ENCODE measurements at regions of chr1 and their contacts with region 1.

Region 1: DNA sequence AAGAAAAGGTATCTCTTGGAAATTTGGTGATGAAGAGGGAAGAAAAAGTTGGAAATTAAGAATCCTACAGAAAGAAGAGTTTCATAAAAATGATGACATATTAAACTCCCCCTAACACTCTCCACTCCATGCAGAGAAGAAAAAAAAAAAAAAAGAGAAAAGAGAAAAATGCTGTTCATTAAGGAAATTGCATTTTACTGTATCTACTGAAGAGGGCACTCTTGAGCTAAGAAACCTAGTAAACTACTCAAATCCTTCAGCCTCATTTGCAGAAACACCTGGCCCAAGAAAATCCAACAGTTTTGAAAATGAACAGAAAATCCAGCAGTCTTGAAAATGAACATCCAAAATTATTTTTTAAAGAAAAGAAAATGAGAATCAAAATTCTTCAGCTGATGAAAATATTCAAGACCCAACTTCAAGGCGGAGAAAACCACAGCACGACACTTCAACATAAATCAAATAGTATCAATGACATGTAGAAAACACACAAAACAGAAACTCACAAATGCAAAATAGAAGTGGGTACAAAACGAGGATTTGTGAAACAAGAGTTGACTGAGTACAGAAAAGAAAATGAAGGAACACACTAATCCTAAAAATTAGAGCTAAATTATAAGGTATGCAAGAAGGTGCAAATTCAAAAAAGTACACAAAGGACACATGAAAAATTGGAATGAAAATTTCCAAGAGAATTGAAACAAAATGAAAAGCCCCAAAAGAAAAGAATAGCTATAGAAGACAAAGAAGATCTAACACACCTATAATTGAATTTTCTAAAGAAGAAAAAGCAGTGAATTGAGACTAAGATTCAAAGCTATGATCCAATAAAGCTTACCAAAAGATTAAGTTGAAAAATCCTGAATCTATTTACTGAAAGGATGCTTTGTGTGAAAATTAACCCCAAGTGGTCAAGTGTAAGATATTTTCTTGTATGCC is 73.2 kb upstream of the DNAJC6 start:
- DNase-seq: peak; percentile 52
- H3K4me3 ChIP-seq: no peak overlapping the region
- H3K27ac ChIP-seq: no peak overlapping the region
- H3K4me1 ChIP-seq: no peaks in the 10 kb centered on the region
- H3K27me3 ChIP-seq: no peaks in the 10 kb centered on the region
- CTCF ChIP-seq: peak; percentile 37 to 40
- POLR2A ChIP-seq: no peak

Region 2: GRCh38 chr1:65066766-65067490 is 169.2 kb before region 1 on chr1:
- CTCF ChIA-PET with region 1: no interaction called
- POLR2A ChIA-PET with region 1: no interaction called
- dilution Hi-C with region 1: no loop called
- intact Hi-C with region 1: no loop called
- DNase-seq: peak; percentile 74
- H3K4me3 ChIP-seq: peak overlapping the region; percentile 73 to 95 (median 88)
- H3K27ac ChIP-seq: peak overlapping the region; percentile 82
- H3K4me1 ChIP-seq: peaks cover 14% of the 10 kb centered on the region
- H3K27me3 ChIP-seq: no peaks in the 10 kb centered on the region
- CTCF ChIP-seq: no peak
- POLR2A ChIP-seq: no peak

Region 3: DNA sequence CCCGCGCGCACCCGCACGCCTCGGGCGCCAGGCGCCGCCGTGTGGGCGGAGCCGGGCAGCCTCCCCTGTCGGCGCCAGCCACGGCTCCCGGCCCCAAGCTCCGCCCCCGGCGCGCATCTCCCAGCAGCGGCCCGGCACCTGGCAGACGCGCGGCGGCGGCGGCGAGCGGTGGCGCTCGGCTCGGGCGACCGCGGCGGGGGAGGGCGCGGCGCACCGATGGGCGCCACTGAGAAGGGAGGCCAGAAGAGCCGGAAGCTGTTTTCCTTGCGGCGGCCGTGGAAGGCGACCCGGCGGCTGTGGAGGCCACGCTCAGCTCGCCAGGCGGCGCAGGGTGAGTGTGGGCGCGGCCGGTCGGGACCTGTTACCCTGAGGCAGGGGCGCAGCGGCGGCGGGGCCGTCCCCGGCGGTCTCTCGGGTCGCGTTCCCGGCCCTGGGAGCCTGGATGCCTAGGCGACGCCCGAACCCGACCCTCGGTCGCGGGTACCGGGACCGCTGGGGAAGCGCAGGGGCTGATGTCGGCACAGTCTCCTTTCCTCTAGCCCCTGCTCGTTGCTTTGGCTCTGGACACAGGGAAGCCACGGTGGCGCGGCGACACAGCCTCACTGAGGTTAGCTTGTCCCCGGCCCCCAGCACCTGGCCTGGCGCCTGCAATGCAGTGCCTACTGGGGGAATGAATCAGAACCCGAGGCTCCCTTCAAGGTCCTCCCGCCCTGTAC is 18.3 kb after region 1 on chr1:
- CTCF ChIA-PET with region 1: interaction called, 14 read pairs
- POLR2A ChIA-PET with region 1: no interaction called
- dilution Hi-C with region 1: no loop called
- intact Hi-C with region 1: no loop called
- DNase-seq: peak; percentile 57
- H3K4me3 ChIP-seq: peak overlapping the region; percentile 44 to 80 (median 70)
- H3K27ac ChIP-seq: peak overlapping the region; percentile 1
- H3K4me1 ChIP-seq: peaks cover 13% of the 10 kb centered on the region
- H3K27me3 ChIP-seq: no peaks in the 10 kb centered on the region
- CTCF ChIP-seq: peak in 1 of 2 donors; percentile 30
- POLR2A ChIP-seq: no peak

Region 4: DNA sequence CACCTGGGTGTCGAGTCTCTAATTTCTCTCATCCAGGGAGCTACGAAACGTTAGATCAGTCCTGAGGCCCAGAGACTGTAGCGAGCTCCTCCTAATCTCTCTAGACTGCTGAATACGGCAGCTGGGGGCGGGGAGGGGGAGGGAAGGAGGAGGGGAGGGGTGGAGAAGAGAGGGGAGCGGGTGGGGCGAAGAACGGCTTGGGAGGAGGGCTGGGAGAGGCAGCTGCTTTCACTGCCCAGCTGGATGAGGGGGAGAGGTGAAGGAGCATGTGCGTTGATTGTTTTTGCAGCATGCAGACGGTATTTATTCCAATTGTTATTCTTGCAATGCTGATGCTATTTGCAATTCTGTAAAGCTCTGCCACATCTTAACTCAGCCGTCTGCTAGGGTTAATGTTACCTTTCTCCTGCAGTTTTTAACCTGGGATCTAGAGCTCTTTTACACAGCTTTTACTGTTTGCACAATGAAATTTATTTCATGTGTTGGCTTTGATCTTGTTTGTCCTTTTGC is 74.0 kb after region 1 on chr1:
- CTCF ChIA-PET with region 1: no interaction called
- POLR2A ChIA-PET with region 1: no interaction called
- dilution Hi-C with region 1: no loop called
- intact Hi-C with region 1: no loop called
- DNase-seq: no peak
- H3K4me3 ChIP-seq: no peak overlapping the region
- H3K27ac ChIP-seq: no peak overlapping the region
- H3K4me1 ChIP-seq: no peaks in the 10 kb centered on the region
- H3K27me3 ChIP-seq: peaks cover 5 to 8% of the 10 kb centered on the region in 2 experiments
- CTCF ChIP-seq: no peak
- POLR2A ChIP-seq: no peak

Region 5: GRCh38 chr1:65377496-65378246 is 141.5 kb after region 1 on chr1:
- CTCF ChIA-PET with region 1: no interaction called
- POLR2A ChIA-PET with region 1: no interaction called
- dilution Hi-C with region 1: no loop called
- intact Hi-C with region 1: no loop called
- DNase-seq: no peak
- H3K4me3 ChIP-seq: no peak overlapping the region
- H3K27ac ChIP-seq: no peak overlapping the region
- H3K4me1 ChIP-seq: no peaks in the 10 kb centered on the region
- H3K27me3 ChIP-seq: no peaks in the 10 kb centered on the region
- CTCF ChIP-seq: no peak
- POLR2A ChIP-seq: no peak

Region 6: DNA sequence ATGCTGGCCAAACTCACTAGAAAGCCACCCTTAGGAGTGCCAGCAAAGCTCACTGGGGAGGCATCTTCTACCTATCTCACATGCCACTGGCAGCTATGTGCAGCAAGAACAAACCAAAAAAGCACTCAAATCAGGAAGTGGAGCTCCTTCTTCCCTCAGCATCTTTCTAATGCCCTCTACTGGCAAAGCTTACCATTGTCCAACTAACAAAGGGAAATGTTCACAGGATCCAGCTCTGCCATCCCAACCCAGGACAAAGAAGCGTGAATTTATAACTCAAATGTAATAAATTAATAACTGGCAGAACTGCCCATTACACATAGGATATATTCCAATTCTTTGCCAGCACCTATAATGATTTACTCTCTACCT is 223.2 kb after region 1 on chr1:
- CTCF ChIA-PET with region 1: interaction called, 37 read pairs
- POLR2A ChIA-PET with region 1: no interaction called
- dilution Hi-C with region 1: no loop called
- intact Hi-C with region 1: loop called (anchors 1 kb)
- DNase-seq: peak; percentile 50
- H3K4me3 ChIP-seq: no peak overlapping the region
- H3K27ac ChIP-seq: no peak overlapping the region
- H3K4me1 ChIP-seq: no peaks in the 10 kb centered on the region
- H3K27me3 ChIP-seq: no peaks in the 10 kb centered on the region
- CTCF ChIP-seq: peak; percentile 44 to 56
- POLR2A ChIP-seq: no peak

Region 7: GRCh38 chr1:65581119-65581518 is 345.0 kb after region 1 on chr1:
- CTCF ChIA-PET with region 1: interaction called, 3 read pairs
- POLR2A ChIA-PET with region 1: no interaction called
- dilution Hi-C with region 1: no loop called
- intact Hi-C with region 1: loop called (anchors 5 kb)
- DNase-seq: peak; percentile 36
- H3K4me3 ChIP-seq: no peak overlapping the region
- H3K27ac ChIP-seq: no peak overlapping the region
- H3K4me1 ChIP-seq: no peaks in the 10 kb centered on the region
- H3K27me3 ChIP-seq: no peaks in the 10 kb centered on the region
- CTCF ChIP-seq: no peak
- POLR2A ChIP-seq: no peak

Region 8: DNA sequence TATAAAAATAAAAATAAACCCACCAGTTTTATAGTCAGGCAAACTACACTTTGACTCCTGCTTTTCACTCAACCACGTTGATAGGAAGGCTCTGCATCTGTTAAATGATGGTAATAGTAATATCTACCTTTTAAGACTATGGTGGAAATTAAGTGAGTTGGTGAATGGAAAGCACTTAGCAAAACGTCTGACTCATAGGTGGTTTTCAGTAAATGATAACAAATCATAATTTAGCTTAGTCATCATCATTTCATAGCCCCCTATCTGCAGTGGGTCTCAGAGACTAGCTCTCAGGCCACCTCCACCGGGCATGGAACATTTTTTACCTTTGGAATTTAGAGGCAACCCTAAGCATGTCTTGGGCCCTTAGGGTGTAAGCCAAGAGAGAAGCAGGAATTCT is 716.6 kb after region 1 on chr1:
- CTCF ChIA-PET with region 1: no interaction called
- POLR2A ChIA-PET with region 1: no interaction called
- dilution Hi-C with region 1: no loop called
- intact Hi-C with region 1: loop called (anchors 2 kb)
- DNase-seq: peak; percentile 42
- H3K4me3 ChIP-seq: no peak overlapping the region
- H3K27ac ChIP-seq: peak overlapping the region; percentile 67
- H3K4me1 ChIP-seq: peaks cover 17% of the 10 kb centered on the region
- H3K27me3 ChIP-seq: no peaks in the 10 kb centered on the region
- CTCF ChIP-seq: no peak
- POLR2A ChIP-seq: no peak

Region 9: DNA sequence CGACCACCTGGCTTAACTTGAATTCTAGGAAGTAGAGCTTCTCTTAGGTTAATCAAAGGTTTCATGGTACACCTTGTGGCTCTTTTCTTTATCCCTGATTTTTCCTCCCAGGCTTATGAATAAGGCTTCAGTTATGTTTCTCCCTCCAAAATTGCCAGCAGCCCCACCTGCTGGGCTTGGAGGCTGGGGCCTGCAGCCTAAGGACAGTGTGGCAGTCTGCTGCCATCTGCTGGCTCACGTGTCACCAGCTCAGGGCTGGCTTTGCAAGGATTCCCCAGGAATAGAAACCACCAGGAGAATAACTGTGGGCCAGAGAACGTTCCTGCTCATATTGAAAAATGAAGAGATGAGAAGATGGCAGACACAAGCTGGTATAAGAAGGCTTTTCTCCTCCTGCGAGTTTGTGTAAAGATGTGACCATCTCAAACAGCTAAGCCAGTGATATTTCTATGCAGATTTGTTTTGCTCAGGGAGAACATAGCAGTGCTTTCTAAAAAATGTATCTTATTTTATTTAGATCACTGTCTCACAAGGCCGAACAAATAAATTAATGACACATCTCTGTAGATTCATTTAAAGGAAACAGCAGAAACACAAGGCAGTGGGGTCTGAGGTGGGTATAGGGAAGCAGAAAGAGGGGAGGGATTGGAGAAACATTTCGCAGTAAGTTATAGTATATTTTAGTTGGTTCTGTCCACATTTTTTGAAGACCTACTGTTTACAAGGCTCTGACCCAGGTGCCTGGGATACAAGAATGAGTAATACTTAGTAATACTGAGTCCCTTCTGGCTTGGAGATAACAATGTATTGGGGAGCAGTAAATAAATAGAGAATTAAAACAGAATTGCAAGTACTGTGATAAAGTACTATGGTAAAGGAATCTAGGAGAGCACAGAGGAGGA is 1006.8 kb after region 1 on chr1:
- CTCF ChIA-PET with region 1: interaction called, 18 read pairs
- POLR2A ChIA-PET with region 1: no interaction called
- dilution Hi-C with region 1: no loop called
- intact Hi-C with region 1: loop called (anchors 1 kb)
- DNase-seq: peak; percentile 85
- H3K4me3 ChIP-seq: no peak overlapping the region
- H3K27ac ChIP-seq: peak overlapping the region; percentile 64
- H3K4me1 ChIP-seq: peaks cover 26% of the 10 kb centered on the region
- H3K27me3 ChIP-seq: no peaks in the 10 kb centered on the region
- CTCF ChIP-seq: peak; percentile 98 to 100
- POLR2A ChIP-seq: no peak

Region 10: GRCh38 chr1:66426239-66426853 is 1190.2 kb after region 1 on chr1:
- CTCF ChIA-PET with region 1: no interaction called
- POLR2A ChIA-PET with region 1: no interaction called
- dilution Hi-C with region 1: no loop called
- intact Hi-C with region 1: no loop called
- DNase-seq: no peak
- H3K4me3 ChIP-seq: no peak overlapping the region
- H3K27ac ChIP-seq: no peak overlapping the region
- H3K4me1 ChIP-seq: no peaks in the 10 kb centered on the region
- H3K27me3 ChIP-seq: no peaks in the 10 kb centered on the region
- CTCF ChIP-seq: no peak
- POLR2A ChIP-seq: no peak

Measured in endothelial cell of umbilical vein (primary cell).